ENCODE measurements at regions of chr16 and their contacts with region 1.

Region 1: DNA sequence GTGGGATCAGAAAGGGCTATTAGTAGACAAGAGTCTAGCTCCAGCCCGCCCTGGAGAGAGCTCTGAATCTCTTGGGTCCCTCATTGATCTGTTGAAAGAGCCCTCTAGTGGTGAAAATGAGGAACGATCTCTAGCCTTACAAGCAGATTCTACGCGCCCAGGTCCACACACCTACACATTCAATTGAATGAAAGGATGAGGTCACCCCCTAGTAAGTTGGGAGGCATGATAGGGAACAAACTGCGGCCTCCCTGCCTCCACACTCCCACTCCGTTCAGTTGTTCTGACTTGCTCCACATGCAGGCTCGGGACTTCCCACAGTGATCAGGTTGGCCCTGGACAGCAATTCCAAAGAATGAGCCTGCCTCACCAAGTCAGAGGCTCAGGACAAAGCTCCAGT is 2.9 kb upstream of the CACNG3 start:
- DNase-seq: peak; percentile 42 to 46
- H3K4me3 ChIP-seq: no peak overlapping the region
- H3K4me1 ChIP-seq: no peaks in the 10 kb centered on the region
- H3K27me3 ChIP-seq: no peaks in the 10 kb centered on the region

Region 2: DNA sequence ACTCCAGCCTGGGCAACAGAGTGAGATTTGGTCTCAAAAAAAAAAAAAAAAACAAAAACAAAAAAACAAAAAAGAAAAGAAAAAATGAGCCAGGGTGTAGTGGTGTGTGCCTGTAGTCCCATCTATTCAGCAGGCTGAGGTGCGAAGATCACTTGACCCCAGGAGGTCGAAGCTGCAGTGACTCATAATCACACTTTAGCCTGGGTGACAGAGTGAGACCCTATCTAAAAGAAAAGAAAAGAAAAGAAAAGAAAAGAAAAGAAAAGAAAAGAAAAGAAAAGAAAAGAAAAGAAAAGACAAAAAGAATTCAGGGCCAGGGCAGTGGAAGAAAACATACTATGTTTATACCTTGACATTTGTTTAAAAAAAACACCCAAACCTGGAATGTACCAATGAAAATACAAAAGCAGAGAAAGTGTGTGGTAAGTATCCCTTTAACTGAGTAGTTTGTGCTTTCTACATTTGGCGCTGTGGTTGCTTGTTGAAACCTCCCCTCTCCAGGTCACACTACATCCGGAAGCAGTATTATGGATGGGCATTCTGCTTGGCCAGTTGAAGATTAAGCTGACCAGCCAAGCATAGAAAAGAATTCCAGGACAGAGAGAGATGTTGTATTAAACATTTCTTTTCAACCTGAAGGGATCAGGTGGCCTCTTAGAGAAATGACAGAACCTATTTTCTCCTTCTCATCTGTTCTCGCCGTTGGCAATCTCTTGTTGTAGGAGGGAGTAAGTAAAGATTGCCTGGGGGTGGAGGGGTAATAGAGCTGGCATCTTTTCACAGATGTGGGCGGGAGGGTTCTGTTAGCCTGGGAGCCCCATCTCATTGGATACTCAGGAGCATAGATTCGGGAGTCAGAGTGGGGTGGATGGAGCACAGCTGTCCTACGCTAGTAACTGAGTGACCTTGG is 429.5 kb before region 1 on chr16:
- in situ Hi-C with region 1: no loop called
- DNase-seq: no peak
- H3K4me3 ChIP-seq: no peak overlapping the region
- H3K4me1 ChIP-seq: no peaks in the 10 kb centered on the region
- H3K27me3 ChIP-seq: no peaks in the 10 kb centered on the region; the same call in 1 of the 2 replicates

Region 3: DNA sequence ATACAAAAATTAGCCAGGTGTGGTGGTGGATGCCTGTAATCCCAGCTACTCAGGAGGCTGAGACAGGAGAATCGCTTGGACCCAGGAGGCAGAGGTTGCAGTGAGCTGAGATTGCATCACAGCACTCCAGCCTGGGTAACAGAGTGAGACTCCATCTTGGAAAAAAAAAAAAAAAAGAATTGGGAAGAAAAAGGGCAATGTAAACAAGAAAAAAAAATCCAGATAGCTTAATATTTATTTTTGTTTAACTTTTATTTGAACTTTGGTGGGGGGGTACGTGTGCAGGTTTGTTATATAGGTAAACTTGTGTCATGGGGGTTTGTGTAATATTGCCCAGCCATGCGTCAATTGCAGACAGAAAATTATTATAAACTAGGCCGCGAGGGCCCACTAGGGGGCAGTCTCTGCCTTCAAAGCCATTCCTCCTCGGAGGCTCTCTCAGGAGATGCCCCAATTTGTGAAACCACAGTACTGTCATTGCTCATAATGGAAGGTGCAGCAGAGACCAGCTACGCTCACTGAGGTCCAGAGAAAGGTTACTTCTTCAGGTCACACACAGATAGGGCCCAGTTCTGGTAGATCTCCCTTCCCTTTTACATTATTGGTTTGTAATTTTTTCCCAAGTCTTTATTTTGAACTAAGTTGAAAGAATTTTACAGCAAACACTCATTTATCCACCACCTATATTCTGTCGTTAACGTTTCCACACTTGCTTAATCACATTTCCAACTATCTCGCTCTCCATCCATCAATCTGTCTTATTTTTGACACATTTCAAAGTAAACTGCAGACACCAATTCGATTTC is 211.2 kb before region 1 on chr16:
- in situ Hi-C with region 1: loop called (anchors 10 kb)
- DNase-seq: peak; percentile 56 to 83
- H3K4me3 ChIP-seq: no peak overlapping the region
- H3K4me1 ChIP-seq: no peaks in the 10 kb centered on the region
- H3K27me3 ChIP-seq: no peaks in the 10 kb centered on the region

Region 4: GRCh38 chr16:24070851-24071250 is 182.3 kb before region 1 on chr16:
- in situ Hi-C with region 1: loop called (anchors 5 kb)
- DNase-seq: peak; percentile 55 to 57
- H3K4me3 ChIP-seq: no peak overlapping the region
- H3K4me1 ChIP-seq: no peaks in the 10 kb centered on the region; the same call in 1 of the 2 replicates
- H3K27me3 ChIP-seq: peaks cover 1% of the 10 kb centered on the region; the same call in 1 of the 2 replicates

Region 5: DNA sequence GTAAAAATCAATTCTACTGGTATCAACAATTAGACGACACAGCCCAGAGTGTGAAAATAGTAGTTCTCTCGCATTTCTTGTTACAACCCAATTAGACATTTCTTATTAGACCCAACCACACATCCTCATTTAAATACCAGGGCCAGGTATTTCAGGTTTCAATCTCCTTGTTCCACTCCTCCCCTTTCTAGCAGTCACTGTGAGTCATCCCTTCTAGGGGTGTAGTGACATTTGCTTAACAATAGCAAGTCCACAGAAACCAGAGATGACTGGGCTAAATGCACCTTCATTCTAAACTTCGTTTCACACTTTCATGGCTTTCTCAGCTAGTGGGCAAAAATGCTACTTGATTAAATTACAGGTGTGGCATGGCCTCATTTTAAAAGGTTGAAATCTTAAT is 113.9 kb before region 1 on chr16:
- in situ Hi-C with region 1: loop called (anchors 10 kb)
- DNase-seq: no peak
- H3K4me3 ChIP-seq: no peak overlapping the region
- H3K4me1 ChIP-seq: no peaks in the 10 kb centered on the region
- H3K27me3 ChIP-seq: no peaks in the 10 kb centered on the region

Region 6: GRCh38 chr16:24150282-24150681 is 102.9 kb before region 1 on chr16:
- in situ Hi-C with region 1: no loop called
- DNase-seq: no peak
- H3K4me3 ChIP-seq: no peak overlapping the region
- H3K4me1 ChIP-seq: no peaks in the 10 kb centered on the region
- H3K27me3 ChIP-seq: no peaks in the 10 kb centered on the region

Region 7: DNA sequence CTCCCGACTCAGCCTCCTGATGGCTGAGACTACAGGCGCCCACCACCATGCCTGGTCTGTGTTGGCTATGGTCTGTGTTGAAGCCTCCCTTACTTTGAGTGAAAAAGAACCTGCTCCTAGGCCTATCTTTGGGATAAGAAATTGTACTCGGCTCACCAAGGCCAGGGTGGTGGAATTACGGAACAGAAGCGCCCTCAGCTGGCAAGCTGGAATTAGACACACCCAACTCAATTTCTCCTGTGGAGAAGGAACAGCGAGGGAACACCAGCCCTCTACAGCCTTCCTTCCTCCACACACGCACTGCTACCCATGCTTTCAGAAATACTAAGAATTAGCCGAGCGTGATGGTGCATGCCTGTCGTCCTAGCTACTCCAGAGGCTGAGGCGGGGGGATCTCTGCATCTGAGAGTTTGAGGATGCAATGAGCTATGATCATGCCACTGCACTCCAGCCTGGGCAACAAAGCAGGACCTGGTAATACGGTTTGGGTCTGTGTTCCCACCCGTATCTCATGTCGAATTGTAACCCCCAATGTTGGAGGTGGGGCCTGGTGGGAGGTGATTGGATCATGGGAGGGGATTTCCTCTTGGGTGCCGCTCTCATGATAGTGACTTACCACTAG is 246.1 kb after region 1 on chr16:
- in situ Hi-C with region 1: loop called (anchors 10 kb)
- DNase-seq: peak; percentile 55 to 69
- H3K4me3 ChIP-seq: no peak overlapping the region
- H3K4me1 ChIP-seq: no peaks in the 10 kb centered on the region; the same call in 1 of the 2 replicates
- H3K27me3 ChIP-seq: no peaks in the 10 kb centered on the region